ENCODE measurements at regions of chr2 and their contacts with region 1.

Region 1: GRCh38 chr2:109510136-109511028 is 103.4 kb downstream of the SEPTIN10 start:
- DNase-seq: peak; percentile 66
- H3K4me3 ChIP-seq: no peak overlapping the region
- H3K27ac ChIP-seq: no peak overlapping the region
- H3K4me1 ChIP-seq: no peaks in the 10 kb centered on the region
- H3K27me3 ChIP-seq: no peaks in the 10 kb centered on the region
- CTCF ChIP-seq: peak; percentile 90 to 96
- POLR2A ChIP-seq: no peak

Region 2: DNA sequence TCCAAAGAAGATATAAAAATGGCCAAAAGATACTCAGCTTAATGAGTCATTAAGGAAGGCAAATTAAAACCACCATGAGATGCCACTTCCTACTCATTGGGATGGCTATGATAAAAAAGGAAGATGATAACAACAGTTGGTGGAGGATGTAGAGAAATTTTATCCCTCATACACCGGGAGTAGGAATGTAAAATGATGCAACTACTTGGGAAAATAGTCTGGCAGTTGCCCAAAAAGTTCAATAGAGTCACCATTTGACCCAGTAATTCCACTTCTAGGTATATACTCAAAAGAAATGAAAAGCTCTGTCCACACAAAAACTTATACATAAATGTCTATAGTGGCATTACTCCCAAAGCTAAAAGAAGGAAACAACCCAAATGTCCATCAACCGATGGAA is 1231.8 kb before region 1 on chr2:
- CTCF ChIA-PET with region 1: no interaction called
- POLR2A ChIA-PET with region 1: no interaction called
- dilution Hi-C with region 1: no loop called
- intact Hi-C with region 1: no loop called
- DNase-seq: no peak
- H3K4me3 ChIP-seq: no peak overlapping the region
- H3K27ac ChIP-seq: no peak overlapping the region
- H3K4me1 ChIP-seq: no peaks in the 10 kb centered on the region
- H3K27me3 ChIP-seq: no peaks in the 10 kb centered on the region
- CTCF ChIP-seq: no peak
- POLR2A ChIP-seq: no peak

Region 3: GRCh38 chr2:108855194-108855593 is 655.2 kb before region 1 on chr2:
- CTCF ChIA-PET with region 1: interaction called, 10 read pairs
- POLR2A ChIA-PET with region 1: no interaction called
- dilution Hi-C with region 1: no loop called
- intact Hi-C with region 1: no loop called
- DNase-seq: peak; percentile 24
- H3K4me3 ChIP-seq: no peak overlapping the region
- H3K27ac ChIP-seq: no peak overlapping the region
- H3K4me1 ChIP-seq: no peaks in the 10 kb centered on the region
- H3K27me3 ChIP-seq: no peaks in the 10 kb centered on the region
- CTCF ChIP-seq: no peak
- POLR2A ChIP-seq: no peak

Region 4: GRCh38 chr2:109138449-109138848 is 371.9 kb before region 1 on chr2:
- CTCF ChIA-PET with region 1: interaction called, 163 read pairs
- POLR2A ChIA-PET with region 1: no interaction called
- dilution Hi-C with region 1: no loop called
- intact Hi-C with region 1: no loop called
- DNase-seq: peak; percentile 59
- H3K4me3 ChIP-seq: no peak overlapping the region
- H3K27ac ChIP-seq: no peak overlapping the region
- H3K4me1 ChIP-seq: peaks cover 33% of the 10 kb centered on the region
- H3K27me3 ChIP-seq: no peaks in the 10 kb centered on the region
- CTCF ChIP-seq: no peak
- POLR2A ChIP-seq: no peak

Region 5: DNA sequence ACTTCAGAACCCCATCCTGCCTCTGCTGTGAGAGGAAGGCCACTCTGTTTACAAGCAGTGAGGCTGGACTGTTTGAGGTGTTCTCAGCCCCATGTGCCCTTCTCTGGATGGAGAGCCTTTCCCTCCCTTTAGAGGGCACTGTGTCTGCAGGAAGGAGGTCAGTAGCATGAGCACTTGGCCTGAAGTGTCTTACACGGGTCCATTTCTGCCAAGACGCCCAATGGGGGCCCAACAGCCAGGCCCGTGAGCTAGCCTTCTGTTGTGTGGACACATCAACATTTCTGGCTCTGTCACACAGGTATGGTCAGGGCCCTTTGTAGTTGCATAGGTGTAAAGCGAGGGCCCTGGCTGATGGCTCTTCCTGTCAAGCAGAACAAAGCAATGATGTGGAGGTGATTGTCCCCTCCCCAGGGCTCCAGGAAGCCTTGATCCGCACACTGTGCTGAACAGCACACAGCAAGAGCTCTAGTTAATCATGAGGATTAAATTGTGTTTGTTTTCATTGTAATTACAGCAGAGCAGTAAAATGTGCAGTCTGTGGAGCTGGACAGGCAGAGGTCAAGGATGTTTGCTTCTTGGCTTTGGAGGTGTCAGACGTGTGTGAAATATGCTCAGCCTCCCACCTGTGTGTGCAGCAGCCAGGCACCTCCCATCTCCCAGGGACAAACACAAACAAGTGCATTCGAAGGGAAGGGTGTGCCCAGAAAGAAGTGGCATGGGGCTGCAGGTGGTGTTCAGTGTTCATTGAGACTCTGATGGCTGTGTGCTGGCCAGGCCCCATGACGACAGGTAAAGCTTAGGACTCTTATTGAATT is 249.3 kb before region 1 on chr2:
- CTCF ChIA-PET with region 1: interaction called, 15 read pairs
- POLR2A ChIA-PET with region 1: no interaction called
- dilution Hi-C with region 1: no loop called
- intact Hi-C with region 1: loop called (anchors 2 kb)
- DNase-seq: no peak
- H3K4me3 ChIP-seq: no peak overlapping the region
- H3K27ac ChIP-seq: no peak overlapping the region
- H3K4me1 ChIP-seq: peaks cover 26% of the 10 kb centered on the region
- H3K27me3 ChIP-seq: no peaks in the 10 kb centered on the region
- CTCF ChIP-seq: peak; percentile 24 to 45
- POLR2A ChIP-seq: no peak

Region 6: DNA sequence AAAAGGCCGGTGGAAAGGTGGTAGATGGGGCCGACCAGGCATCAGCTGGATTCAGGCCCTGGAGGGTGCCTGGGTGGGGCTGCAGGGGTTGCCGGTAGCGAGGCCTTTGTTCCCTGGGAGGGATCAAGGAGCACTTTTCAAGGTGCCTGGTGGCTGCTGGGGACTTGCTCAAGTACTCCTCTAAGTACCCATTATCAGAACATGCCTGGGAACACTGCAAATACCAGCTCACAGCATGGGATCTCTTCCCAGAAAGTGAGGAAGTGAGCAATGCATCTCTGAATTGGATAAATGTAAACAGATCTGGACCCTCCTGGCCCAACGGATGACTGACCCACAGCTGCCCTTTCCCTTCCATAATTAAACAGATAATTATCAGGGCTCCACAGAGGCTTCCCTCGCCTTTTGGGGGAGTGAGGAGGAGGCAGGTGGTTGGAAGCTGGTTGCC is 170.8 kb before region 1 on chr2:
- CTCF ChIA-PET with region 1: interaction called, 19 read pairs
- POLR2A ChIA-PET with region 1: no interaction called
- dilution Hi-C with region 1: no loop called
- intact Hi-C with region 1: no loop called
- DNase-seq: peak; percentile 84
- H3K4me3 ChIP-seq: no peak overlapping the region
- H3K27ac ChIP-seq: peak overlapping the region; percentile 52
- H3K4me1 ChIP-seq: peaks cover 37% of the 10 kb centered on the region
- H3K27me3 ChIP-seq: no peaks in the 10 kb centered on the region
- CTCF ChIP-seq: no peak
- POLR2A ChIP-seq: no peak

Region 7: DNA sequence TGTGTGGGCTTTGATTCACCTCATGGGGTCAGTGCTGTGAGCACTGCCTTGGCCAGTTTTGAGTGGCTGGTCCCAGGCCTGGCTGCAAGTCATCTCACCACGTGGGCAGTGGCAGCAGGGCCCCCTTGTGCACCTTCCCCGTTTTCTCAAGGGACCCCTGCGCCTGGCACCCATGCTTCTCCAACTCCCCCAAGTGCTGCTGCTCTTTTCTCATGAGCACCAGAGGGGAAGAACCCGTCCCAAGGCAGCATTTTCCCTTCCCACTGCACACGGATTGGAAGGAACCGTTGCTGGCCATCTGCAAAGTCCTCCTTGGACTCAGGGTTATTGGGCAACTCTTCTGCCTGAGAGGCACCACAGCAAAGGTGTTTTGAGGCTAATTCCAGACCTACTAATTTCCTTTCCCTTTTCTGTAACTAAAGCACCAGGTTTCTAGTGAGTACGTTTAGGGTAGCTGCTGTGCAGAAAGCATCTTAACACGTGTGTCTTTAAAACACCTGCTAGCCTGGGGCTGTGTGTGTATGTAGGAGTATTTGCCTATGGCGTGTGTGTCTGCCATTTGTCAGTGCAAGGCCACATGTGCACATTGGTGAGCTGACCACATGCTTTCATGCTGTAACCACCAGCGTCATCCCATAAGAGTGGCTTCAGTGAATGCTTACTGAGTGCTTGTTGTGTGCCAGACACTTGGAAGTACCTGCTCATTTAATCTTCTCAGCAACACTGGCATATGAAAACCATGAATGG is 138.4 kb before region 1 on chr2:
- CTCF ChIA-PET with region 1: no interaction called
- POLR2A ChIA-PET with region 1: no interaction called
- dilution Hi-C with region 1: no loop called
- intact Hi-C with region 1: no loop called
- DNase-seq: no peak
- H3K4me3 ChIP-seq: no peak overlapping the region
- H3K27ac ChIP-seq: no peak overlapping the region
- H3K4me1 ChIP-seq: no peaks in the 10 kb centered on the region
- H3K27me3 ChIP-seq: no peaks in the 10 kb centered on the region
- CTCF ChIP-seq: no peak
- POLR2A ChIP-seq: no peak

Region 8: GRCh38 chr2:109419960-109420370 is 90.4 kb before region 1 on chr2:
- CTCF ChIA-PET with region 1: interaction called, 7 read pairs
- POLR2A ChIA-PET with region 1: no interaction called
- dilution Hi-C with region 1: no loop called
- intact Hi-C with region 1: loop called (anchors 5 kb)
- DNase-seq: peak; percentile 43
- H3K4me3 ChIP-seq: no peak overlapping the region
- H3K27ac ChIP-seq: no peak overlapping the region
- H3K4me1 ChIP-seq: peaks cover 3% of the 10 kb centered on the region
- H3K27me3 ChIP-seq: no peaks in the 10 kb centered on the region
- CTCF ChIP-seq: no peak
- POLR2A ChIP-seq: no peak

Region 9: DNA sequence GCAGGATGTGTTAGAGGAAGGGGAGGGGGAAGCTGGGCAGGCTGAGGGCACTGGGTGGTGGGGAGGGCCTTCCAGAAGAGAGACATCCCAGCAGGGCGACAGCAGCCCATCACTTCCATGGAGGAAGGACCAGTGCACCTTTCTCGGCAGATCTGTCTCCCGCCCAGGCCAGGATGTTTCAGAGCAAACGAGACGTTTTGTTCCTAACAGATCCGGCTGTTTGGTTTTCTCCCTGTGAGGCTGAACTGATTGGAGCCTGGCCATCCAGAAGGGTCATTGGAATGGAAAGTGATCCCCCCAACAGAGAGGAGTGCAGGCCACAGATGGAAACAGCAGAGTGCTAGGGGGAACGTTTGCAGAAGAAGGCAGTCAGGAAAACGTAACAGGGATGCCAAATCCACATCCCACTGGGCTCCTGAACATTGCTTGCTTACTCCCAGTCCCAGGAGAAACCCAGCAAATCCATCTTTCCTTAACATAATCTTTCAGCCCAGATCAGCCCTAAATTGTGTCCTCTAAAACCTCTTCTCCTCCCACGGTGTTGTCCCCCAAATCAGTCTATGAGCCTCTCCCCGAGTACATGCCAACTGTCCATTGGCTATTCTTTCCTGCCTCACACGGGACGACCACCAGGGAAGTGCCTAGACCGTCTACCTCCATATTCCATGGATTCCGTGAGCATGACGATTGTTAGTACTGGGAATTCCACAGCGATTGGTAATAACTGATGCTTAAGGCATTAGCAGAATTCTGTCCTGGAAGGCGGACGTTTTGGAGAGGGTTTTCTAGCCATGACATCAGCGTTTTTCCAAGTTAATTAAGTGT is 23.5 kb before region 1 on chr2:
- CTCF ChIA-PET with region 1: interaction called, 29 read pairs
- POLR2A ChIA-PET with region 1: no interaction called
- dilution Hi-C with region 1: no loop called
- intact Hi-C with region 1: no loop called
- DNase-seq: peak; percentile 67
- H3K4me3 ChIP-seq: no peak overlapping the region
- H3K27ac ChIP-seq: peak overlapping the region; percentile 75
- H3K4me1 ChIP-seq: peaks cover 33% of the 10 kb centered on the region
- H3K27me3 ChIP-seq: no peaks in the 10 kb centered on the region
- CTCF ChIP-seq: no peak
- POLR2A ChIP-seq: no peak

Region 10: DNA sequence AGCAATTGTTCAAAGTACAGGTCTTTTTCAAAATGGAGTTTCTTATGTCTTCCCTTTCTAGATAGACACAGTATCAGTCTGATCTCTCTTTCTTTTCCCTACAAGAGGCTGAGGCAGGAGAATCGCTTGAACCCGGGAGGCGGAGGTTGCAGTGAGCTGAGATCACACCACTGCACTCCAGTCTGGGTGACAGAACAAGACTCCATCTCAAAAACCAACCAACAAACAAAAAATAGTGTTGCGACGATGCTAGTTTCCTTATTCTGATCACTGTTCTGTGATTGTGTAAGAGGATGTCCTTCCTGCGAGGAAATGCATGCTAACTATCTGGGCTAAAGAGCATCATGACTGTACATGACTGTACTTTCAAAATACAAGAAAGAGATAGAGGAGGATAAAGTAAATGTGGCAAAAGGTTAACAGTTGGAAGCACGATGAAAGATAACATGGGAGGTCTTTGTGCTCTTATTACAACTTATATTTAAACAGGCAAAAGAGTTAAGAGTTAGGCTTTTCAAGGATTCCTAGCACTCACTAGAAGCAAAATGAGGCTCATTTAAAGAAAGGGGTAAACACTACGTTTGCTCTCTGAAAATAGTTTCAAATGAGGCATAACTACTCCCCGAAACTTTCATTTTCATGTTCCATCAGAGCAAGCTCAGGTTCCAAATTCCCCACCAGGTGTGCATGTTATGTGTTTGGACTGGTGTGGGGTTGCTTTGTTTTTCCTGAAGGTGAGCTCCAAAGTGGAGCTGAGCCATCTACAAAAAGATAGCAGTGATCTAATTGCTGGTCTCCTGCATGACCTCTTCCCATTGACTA is 127.6 kb after region 1 on chr2:
- CTCF ChIA-PET with region 1: no interaction called
- POLR2A ChIA-PET with region 1: no interaction called
- dilution Hi-C with region 1: no loop called
- intact Hi-C with region 1: no loop called
- DNase-seq: no peak
- H3K4me3 ChIP-seq: no peak overlapping the region
- H3K27ac ChIP-seq: no peak overlapping the region
- H3K4me1 ChIP-seq: no peaks in the 10 kb centered on the region
- H3K27me3 ChIP-seq: peaks cover 5% of the 10 kb centered on the region in 2 experiments
- CTCF ChIP-seq: no peak
- POLR2A ChIP-seq: no peak

Region 11: GRCh38 chr2:109663721-109664120 is 153.3 kb after region 1 on chr2:
- CTCF ChIA-PET with region 1: no interaction called
- POLR2A ChIA-PET with region 1: no interaction called
- dilution Hi-C with region 1: no loop called
- intact Hi-C with region 1: no loop called
- DNase-seq: no peak
- H3K4me3 ChIP-seq: no peak overlapping the region
- H3K27ac ChIP-seq: no peak overlapping the region
- H3K4me1 ChIP-seq: no peaks in the 10 kb centered on the region
- H3K27me3 ChIP-seq: peaks cover 17 to 38% of the 10 kb centered on the region in 2 experiments
- CTCF ChIP-seq: no peak
- POLR2A ChIP-seq: no peak

Measured in endothelial cell of umbilical vein (primary cell).